HEK293 (cell line): ENCODE measurements at regions of chrX and their contacts with region 1.

Region 1: GRCh38 chrX:65528705-65529340 is 5.8 kb downstream of the LAS1L start:
- H3K4me3 ChIP-seq: no peak overlapping the region
- H3K27ac ChIP-seq: no peak overlapping the region
- H3K4me1 ChIP-seq: no peaks in the 10 kb centered on the region
- CTCF ChIP-seq: peak; percentile 90

Region 2: GRCh38 chrX:65513610-65514009 is 15.2 kb before region 1 on chrX:
- CTCF ChIA-PET with region 1: interaction called, 24 read pairs
- POLR2A ChIA-PET with region 1: interaction called, 3 read pairs
- H3K4me3 ChIP-seq: no peak overlapping the region
- H3K27ac ChIP-seq: no peak overlapping the region
- H3K4me1 ChIP-seq: no peaks in the 10 kb centered on the region
- CTCF ChIP-seq: no peak

Region 3: GRCh38 chrX:65586491-65586890 is 57.7 kb after region 1 on chrX:
- CTCF ChIA-PET with region 1: no interaction called
- POLR2A ChIA-PET with region 1: no interaction called
- H3K4me3 ChIP-seq: no peak overlapping the region
- H3K27ac ChIP-seq: no peak overlapping the region
- H3K4me1 ChIP-seq: no peaks in the 10 kb centered on the region
- CTCF ChIP-seq: no peak